Left lung (tissue), 14 donors: ENCODE measurements at regions of chr2 and their contacts with region 1.

Region 1: GRCh38 chr2:168920504-168921157 is 19.5 kb downstream of the G6PC2 start:
- DNase-seq: peak in 2 of 4 donors; percentile 13 to 19
- ATAC-seq: peak; percentile 69
- H3K4me3 ChIP-seq: no peak overlapping the region
- H3K27ac ChIP-seq: no peak overlapping the region
- H3K4me1 ChIP-seq: no peaks in the 10 kb centered on the region
- H3K27me3 ChIP-seq: no peaks in the 10 kb centered on the region
- CTCF ChIP-seq: peak in 1 of 2 donors; percentile 48

Region 2: GRCh38 chr2:168758970-168759820 is 161.4 kb before region 1 on chr2:
- intact Hi-C with region 1: no loop called
- DNase-seq: peak in 2 of 4 donors; percentile 30 to 61
- ATAC-seq: peak; percentile 91
- H3K4me3 ChIP-seq: no peak overlapping the region
- H3K27ac ChIP-seq: no peak overlapping the region
- H3K4me1 ChIP-seq: peaks cover 0 to 11% of the 10 kb centered on the region in 2 donors
- H3K27me3 ChIP-seq: no peaks in the 10 kb centered on the region
- CTCF ChIP-seq: peak; percentile 39 to 49

Region 3: GRCh38 chr2:168773719-168774521 is 146.7 kb before region 1 on chr2:
- intact Hi-C with region 1: loop called in 1 of 2 experiments (anchors 5 kb)
- DNase-seq: peak in 3 of 4 donors; percentile 42 to 62 (median 42)
- ATAC-seq: peak; percentile 97
- H3K4me3 ChIP-seq: no peak overlapping the region
- H3K27ac ChIP-seq: no peak overlapping the region
- H3K4me1 ChIP-seq: peaks cover 0 to 8% of the 10 kb centered on the region in 2 donors
- H3K27me3 ChIP-seq: no peaks in the 10 kb centered on the region
- CTCF ChIP-seq: peak; percentile 74 to 77